ENCODE measurements at regions of chr20 and their contacts with region 1.

Region 1: GRCh38 chr20:20765696-20766365 is 53.4 kb upstream of the RALGAPA2 start:
- DNase-seq: no peak
- ATAC-seq: no peak
- H3K4me3 ChIP-seq: no peak overlapping the region
- H3K27ac ChIP-seq: no peak overlapping the region
- H3K4me1 ChIP-seq: no peaks in the 10 kb centered on the region
- H3K27me3 ChIP-seq: no peaks in the 10 kb centered on the region
- CTCF ChIP-seq: no peak
- EP300 ChIP-seq: no peak
- POLR2A ChIP-seq: no peak
- RAD21 ChIP-seq: no peak

Region 2: GRCh38 chr20:20690676-20691476 is 75.0 kb before region 1 on chr20:
- CTCF ChIA-PET with region 1: no interaction called
- POLR2A ChIA-PET with region 1: no interaction called
- in situ Hi-C with region 1: no loop called
- intact Hi-C with region 1: loop called (anchors 2 kb)
- DNase-seq: no peak
- ATAC-seq: no peak
- H3K4me3 ChIP-seq: no peak overlapping the region
- H3K27ac ChIP-seq: no peak overlapping the region
- H3K4me1 ChIP-seq: peaks cover 13% of the 10 kb centered on the region
- H3K27me3 ChIP-seq: no peaks in the 10 kb centered on the region
- CTCF ChIP-seq: no peak
- EP300 ChIP-seq: no peak
- POLR2A ChIP-seq: no peak
- RAD21 ChIP-seq: no peak

Region 3: DNA sequence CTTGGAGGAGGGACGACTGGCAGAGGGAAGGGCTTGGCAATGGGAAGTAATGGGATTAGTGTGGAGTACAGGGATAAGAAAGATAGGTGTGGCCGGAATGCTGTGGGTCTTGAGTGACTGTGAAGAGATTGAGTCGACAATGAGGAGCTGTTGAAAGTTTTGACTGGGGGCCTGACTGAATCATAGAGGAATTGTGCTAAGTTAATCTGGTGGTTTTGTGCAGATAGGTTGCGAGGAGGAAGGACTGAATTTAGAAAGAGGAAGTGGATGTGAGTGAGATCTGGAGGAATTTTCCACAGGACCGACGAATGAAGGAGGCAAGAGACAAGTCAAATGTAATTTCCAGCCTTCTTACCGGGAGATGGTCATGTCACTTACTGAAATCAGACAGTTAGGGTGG is 90.5 kb after region 1 on chr20:
- CTCF ChIA-PET with region 1: no interaction called
- POLR2A ChIA-PET with region 1: no interaction called
- in situ Hi-C with region 1: no loop called
- intact Hi-C with region 1: no loop called
- DNase-seq: no peak
- ATAC-seq: no peak
- H3K4me3 ChIP-seq: no peak overlapping the region
- H3K27ac ChIP-seq: no peak overlapping the region
- H3K4me1 ChIP-seq: no peaks in the 10 kb centered on the region
- H3K27me3 ChIP-seq: no peaks in the 10 kb centered on the region; a peak in 1 of 5 replicates
- CTCF ChIP-seq: no peak
- EP300 ChIP-seq: no peak
- POLR2A ChIP-seq: no peak
- RAD21 ChIP-seq: no peak